Activated CD8-positive, alpha-beta memory T cell treated with anti-CD3 and anti-CD28 coated beads, Interleukin-2, amount 10 ng/mL, durations not matched to agents 7 days and 5 days (primary cell): ENCODE measurements at regions of chr20 and their contacts with region 1.

Region 1: DNA sequence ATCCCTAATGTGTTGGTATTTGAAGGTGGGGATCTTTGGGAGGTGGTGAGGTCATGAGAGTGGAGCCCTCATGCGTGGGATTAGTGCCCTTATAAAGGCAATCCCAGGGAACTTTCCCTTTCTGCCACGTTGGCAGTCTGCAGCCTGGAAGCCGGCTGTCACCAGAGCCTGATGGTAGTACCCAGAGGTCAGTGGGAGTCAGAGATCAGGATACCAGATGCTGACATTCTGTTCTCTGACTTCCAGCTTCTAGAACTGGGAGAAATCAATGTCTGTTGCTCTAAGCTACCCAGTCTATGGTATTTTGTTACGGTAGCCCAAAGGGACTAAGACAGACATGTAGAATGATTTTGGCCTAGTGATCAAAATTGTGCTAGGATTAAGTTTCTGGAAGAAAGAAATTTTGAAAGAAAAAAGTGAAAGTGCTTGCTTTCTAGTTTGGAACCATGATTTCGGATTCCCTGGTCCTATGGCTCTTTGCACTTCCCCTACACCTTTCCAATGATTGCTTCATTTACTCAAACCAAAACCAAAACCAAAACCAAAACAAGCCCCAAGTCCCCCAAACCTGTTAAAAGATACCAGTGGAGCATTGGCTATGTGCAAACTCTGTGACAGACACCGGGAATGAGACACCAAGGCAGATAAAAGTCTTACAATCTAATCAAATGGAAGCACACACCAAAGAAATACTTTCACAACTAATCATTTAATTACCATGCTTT is 173.7 kb upstream of the ZNF217 start:
- DNase-seq: no peak
- ATAC-seq: peak; percentile 67
- H3K4me3 Mint-ChIP-seq: no peak overlapping the region
- H3K27ac Mint-ChIP-seq: no peak overlapping the region
- H3K4me1 Mint-ChIP-seq: peaks cover 4% of the 10 kb centered on the region
- H3K27me3 Mint-ChIP-seq: no peaks in the 10 kb centered on the region

Region 2: GRCh38 chr20:53750827-53751619 is 16.3 kb before region 1 on chr20:
- CTCF ChIA-PET with region 1: interaction called, 10 read pairs
- DNase-seq: peak; percentile 82
- ATAC-seq: peak; percentile 77
- H3K4me3 Mint-ChIP-seq: peak overlapping the region; percentile 42
- H3K27ac Mint-ChIP-seq: peak overlapping the region; percentile 95
- H3K4me1 Mint-ChIP-seq: peaks cover 74% of the 10 kb centered on the region
- H3K27me3 Mint-ChIP-seq: no peaks in the 10 kb centered on the region